Dorsolateral prefrontal cortex (tissue), 120 donors: ENCODE measurements at regions of chr14 and their contacts with region 1.

Region 1: DNA sequence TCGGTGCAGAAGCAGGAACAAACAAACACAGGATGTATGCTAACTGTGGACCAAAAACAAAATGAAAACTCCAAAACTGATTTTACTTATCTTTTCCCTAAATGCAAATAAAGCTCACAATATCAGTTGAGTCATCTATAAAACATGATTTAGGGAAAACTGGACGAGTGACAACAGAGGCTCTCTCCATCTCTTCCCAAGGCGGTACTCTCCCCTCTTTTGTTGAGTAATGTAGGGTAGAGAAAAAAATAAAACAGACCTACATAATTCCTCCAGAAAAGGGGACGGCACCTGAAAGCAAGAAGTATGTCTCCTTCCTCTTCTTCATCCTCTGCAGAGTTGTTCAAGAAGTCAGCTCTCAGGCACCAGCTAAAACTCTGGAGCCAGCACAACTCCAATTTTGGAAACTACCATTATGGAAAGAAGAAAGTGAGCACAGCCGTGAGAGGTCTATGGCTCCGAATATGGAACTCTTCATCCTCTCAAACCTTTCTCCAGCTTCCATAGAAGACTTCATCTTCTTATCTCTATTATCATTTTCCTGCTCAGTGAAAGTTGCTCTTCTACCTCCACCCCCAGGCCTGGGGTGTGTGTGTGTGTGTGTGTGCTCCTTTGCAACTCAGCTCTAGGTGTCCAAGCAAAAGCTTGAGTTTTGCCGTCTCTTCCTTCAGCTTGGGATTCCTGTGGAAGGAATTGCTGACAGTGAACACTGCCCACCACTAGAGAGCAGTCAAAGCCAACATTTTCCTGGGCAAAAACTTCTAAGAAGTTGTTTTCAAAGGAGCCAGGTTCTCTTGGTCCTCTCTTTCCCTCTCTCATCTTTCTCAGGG is 155.4 kb downstream of the DIO2 start:
- DNase-seq: peak in 8 of 10 donors; percentile 30 to 57 (median 40)
- H3K4me3 ChIP-seq: peak overlapping the region in 54 of 59 donors; percentile 2 to 58 (median 35)
- H3K27ac ChIP-seq: peak overlapping the region in 49 of 59 donors; percentile 5 to 94 (median 58)
- H3K27me3 ChIP-seq: no peaks in the 10 kb centered on the region
- CTCF ChIP-seq: peak; percentile 53 to 91 (median 82)

Region 2: DNA sequence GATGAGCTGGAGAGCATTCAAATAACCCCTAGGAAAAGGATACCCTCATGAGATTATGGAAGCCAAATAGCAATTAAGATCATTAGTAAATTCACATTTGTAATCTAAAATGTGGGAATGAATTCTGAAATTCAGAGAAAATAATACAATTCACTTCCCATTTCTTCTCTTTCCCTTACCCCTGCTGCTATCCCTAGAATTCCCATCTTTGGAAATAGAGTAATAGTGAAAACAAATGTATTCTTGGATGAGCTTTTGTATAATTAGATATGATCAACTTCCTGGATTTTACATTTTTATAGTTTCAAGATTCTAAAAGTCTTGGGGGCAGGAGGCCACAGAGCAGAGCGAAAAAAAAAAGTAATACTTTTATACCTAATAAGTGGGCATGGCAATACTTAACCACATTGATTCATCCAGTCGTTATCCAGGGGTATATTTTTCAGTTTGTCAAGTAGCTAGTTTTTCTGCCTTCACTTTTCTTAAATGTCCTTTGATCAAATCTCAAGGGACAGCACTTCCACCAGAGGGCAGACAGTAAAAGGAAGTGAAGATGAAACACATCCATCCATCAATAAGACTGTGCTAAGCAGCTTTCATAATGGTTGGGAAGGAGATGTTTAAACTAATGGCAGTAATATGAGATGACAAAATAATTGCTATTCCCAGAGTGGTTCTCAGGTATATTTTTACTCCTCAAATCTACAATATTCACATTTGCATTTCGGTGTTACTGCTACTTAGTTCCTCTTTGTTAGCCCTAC is 245.9 kb before region 1 on chr14:
- intact Hi-C with region 1: loop called in 1 of 2 experiments (anchors 5 kb)
- DNase-seq: peak in 1 of 10 donors; percentile 39
- H3K4me3 ChIP-seq: no peak overlapping the region
- H3K27ac ChIP-seq: peak overlapping the region in 23 of 59 donors; percentile 1 to 60 (median 22)
- H3K27me3 ChIP-seq: no peaks in the 10 kb centered on the region
- CTCF ChIP-seq: peak in 55 of 56 donors; percentile 21 to 83 (median 62)

Region 3: GRCh38 chr14:80213599-80213998 is 157.7 kb after region 1 on chr14:
- intact Hi-C with region 1: loop called in 1 of 2 experiments (anchors 10 kb)
- DNase-seq: peak in 1 of 10 donors; percentile 17
- H3K4me3 ChIP-seq: no peak overlapping the region
- H3K27ac ChIP-seq: no peak overlapping the region
- H3K27me3 ChIP-seq: peaks cover 0 to 5% (median 0%) of the 10 kb centered on the region in 45 donors
- CTCF ChIP-seq: peak in 53 of 56 donors; percentile 11 to 63 (median 45)

Region 4: DNA sequence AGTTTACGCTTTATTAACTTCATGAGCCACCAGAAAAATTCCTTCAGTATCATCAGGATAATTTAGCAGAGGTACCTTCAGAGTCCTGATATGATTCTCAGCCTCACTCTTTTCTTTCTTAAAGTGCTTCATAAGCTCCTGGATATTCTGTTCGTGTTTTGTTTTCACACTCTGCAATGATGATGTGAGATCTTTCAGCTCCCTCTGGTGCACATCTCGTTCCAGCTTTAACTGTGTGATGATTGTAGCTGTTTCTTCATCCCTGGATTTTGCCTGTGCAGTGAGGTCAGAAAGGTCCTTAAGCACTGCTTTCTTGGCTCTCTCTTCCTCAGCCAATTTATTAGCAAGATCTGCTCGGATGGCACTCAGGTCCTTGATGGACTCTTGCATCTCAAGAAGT is 728.9 kb after region 1 on chr14:
- intact Hi-C with region 1: loop called (anchors 2 to 5 kb)
- DNase-seq: peak in 2 of 10 donors; percentile 16 to 38
- H3K4me3 ChIP-seq: no peak overlapping the region
- H3K27ac ChIP-seq: no peak overlapping the region
- H3K27me3 ChIP-seq: no peaks in the 10 kb centered on the region
- CTCF ChIP-seq: peak in 44 of 56 donors; percentile 13 to 63 (median 42)

Region 5: GRCh38 chr14:80850197-80850814 is 794.4 kb after region 1 on chr14:
- intact Hi-C with region 1: loop called (anchors 2 to 5 kb)
- DNase-seq: no peak
- H3K4me3 ChIP-seq: no peak overlapping the region
- H3K27ac ChIP-seq: no peak overlapping the region
- H3K27me3 ChIP-seq: no peaks in the 10 kb centered on the region
- CTCF ChIP-seq: peak; percentile 59 to 94 (median 78)